Activated naive CD4-positive, alpha-beta T cell treated with anti-CD3 and anti-CD28 coated beads for 36 hours (primary cell): ENCODE measurements at regions of chr9 and their contacts with region 1.

Region 1: GRCh38 chr9:70924895-70925547 is 196.4 kb downstream of the TRPM3 start:
- DNase-seq: peak; percentile 27
- H3K4me3 Mint-ChIP-seq: no peak overlapping the region
- H3K27ac Mint-ChIP-seq: no peak overlapping the region
- H3K4me1 Mint-ChIP-seq: no peaks in the 10 kb centered on the region
- H3K27me3 Mint-ChIP-seq: no peaks in the 10 kb centered on the region

Region 2: DNA sequence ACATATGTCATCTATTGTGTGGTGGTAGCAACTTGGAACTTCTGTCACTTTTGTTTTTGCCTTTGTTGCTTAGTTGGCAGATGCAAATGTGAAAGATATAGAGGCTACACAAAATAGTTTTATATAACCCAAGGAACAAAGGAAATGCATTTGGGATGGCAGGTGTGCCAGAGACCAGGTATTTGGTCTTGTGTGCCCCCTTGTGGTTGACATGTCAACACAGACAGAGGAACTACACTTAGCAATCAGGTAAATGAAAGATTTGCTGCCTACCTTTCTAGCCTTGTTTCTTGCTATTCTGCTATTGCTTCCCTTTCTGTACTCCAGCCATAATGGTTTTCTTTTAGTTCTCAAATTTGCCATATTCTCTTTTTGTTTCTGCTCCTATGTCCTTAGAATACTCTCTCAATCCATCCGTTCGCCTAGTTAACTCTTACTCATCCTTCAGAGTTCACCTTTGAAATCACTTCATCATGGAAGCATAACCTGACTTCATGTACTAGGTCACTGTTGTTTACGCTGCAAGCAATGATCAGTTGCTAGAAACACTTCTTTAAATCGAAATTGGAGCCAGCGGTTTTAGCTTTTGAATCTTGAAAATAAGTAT is 76.9 kb after region 1 on chr9:
- CTCF ChIA-PET with region 1: no interaction called
- intact Hi-C with region 1: loop called (anchors 2 kb)
- DNase-seq: peak; percentile 19
- H3K4me3 Mint-ChIP-seq: no peak overlapping the region
- H3K27ac Mint-ChIP-seq: no peak overlapping the region
- H3K4me1 Mint-ChIP-seq: no peaks in the 10 kb centered on the region
- H3K27me3 Mint-ChIP-seq: no peaks in the 10 kb centered on the region

Region 3: GRCh38 chr9:71096421-71097108 is 171.5 kb after region 1 on chr9:
- CTCF ChIA-PET with region 1: no interaction called
- intact Hi-C with region 1: loop called (anchors 10 kb)
- DNase-seq: no peak
- H3K4me3 Mint-ChIP-seq: no peak overlapping the region
- H3K27ac Mint-ChIP-seq: no peak overlapping the region
- H3K4me1 Mint-ChIP-seq: no peaks in the 10 kb centered on the region
- H3K27me3 Mint-ChIP-seq: no peaks in the 10 kb centered on the region

Region 4: DNA sequence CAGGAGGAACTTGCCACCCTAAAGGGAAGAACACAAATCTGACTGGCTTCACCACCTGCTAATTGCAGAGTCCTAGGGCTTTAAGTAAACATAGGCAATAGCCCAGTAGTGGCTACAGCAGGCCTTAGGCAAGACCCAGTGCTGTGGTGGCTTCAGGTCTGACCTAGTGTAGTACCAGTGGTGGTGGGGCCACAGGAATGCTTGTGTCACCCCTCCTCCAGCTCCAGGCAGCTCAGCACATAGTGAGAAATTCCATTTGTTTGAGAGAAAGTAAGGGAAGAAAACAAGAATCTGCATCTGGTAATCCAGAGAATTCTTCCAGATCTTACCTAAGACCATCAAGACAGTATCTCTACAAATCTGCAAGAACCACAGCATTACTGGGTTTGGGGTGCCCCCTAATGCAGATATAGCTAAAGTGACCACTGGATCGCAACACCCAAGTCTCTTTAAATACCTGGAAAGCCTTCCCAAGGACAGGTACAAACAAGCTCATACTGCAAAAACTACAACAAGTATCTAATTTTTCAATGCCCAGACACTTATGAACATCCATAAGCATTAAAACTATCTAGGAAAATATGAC is 299.0 kb after region 1 on chr9:
- CTCF ChIA-PET with region 1: no interaction called
- intact Hi-C with region 1: loop called (anchors 1 kb)
- DNase-seq: no peak
- H3K4me3 Mint-ChIP-seq: no peak overlapping the region
- H3K27ac Mint-ChIP-seq: no peak overlapping the region
- H3K4me1 Mint-ChIP-seq: no peaks in the 10 kb centered on the region
- H3K27me3 Mint-ChIP-seq: peaks cover 6% of the 10 kb centered on the region